Activated CD4-positive, alpha-beta T cell treated with anti-CD3 and anti-CD28 coated beads, Interleukin-2, amount 10 ng/mL, durations not matched to agents 24 days and 14 days (primary cell): ENCODE measurements at regions of chr9 and their contacts with region 1.

Region 1: GRCh38 chr9:35910613-35911359 is 1.5 kb downstream of the SPAAR start:
- DNase-seq: peak; percentile 83
- H3K4me3 Mint-ChIP-seq: peak overlapping the region; percentile 68
- H3K27ac Mint-ChIP-seq: peak overlapping the region; percentile 92
- H3K4me1 Mint-ChIP-seq: peaks cover 32% of the 10 kb centered on the region
- H3K27me3 Mint-ChIP-seq: no peaks in the 10 kb centered on the region

Region 2: DNA sequence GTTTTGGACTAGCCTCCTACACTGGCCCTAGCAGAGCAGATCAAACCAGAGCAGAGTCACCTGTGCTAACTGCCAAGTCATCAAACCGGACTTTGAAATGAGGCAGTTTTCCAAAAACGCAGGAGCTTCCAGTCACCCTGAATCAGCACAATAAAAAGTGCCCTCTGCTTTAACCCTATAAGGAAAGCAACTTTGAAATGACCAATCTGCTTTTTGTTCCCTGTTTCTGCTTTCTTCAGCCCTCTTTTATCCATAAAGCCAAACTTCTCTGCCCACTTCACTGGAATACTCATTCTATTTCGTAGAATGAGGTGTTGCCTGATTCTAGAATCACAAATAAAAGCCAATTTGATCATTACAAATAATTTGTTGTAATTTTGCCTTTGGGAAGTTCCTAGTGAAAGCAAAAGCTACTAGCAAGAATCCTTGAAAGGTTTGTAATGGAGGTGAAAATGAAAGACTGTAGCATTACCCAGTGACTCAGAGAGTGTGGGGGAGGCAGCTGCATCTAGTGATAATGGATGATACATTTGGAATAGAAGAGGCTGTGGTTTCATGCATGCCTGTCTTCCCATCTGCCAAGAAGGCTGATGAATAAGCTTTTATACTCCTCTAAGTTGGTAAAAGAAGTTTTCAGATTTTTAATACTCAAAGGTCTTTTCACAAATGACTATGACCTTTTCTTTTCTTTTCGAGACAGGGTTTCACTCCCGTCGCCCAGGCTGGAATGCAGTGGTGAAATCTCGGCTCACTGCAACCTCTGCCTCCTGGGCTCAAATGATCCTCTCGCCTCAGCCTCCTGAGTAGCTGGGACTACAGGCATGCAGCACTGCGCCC is 13.4 kb after region 1 on chr9:
- intact Hi-C with region 1: loop called (anchors 1 kb)
- DNase-seq: no peak
- H3K4me3 Mint-ChIP-seq: no peak overlapping the region
- H3K27ac Mint-ChIP-seq: no peak overlapping the region
- H3K4me1 Mint-ChIP-seq: peaks cover 5% of the 10 kb centered on the region
- H3K27me3 Mint-ChIP-seq: peaks cover 7% of the 10 kb centered on the region